ENCODE measurements at regions of chr21 and their contacts with region 1.

Region 1: GRCh38 chr21:39867198-39867650 is at the start of gene PCP4:
- DNase-seq: peak; percentile 32
- H3K4me3 Mint-ChIP-seq: no peak within 1 kb of the TSS
- H3K27ac Mint-ChIP-seq: no peak within 1 kb of the TSS
- H3K4me1 Mint-ChIP-seq: no peaks in the 10 kb centered on the region
- H3K27me3 Mint-ChIP-seq: peaks cover 72% of the 10 kb centered on the region
- CTCF ChIP-seq: peak; percentile 76
- total RNA-seq, gene PCP4: not detected in 2 replicates

Region 2: GRCh38 chr21:39363607-39364555 is 503.3 kb before region 1 on chr21:
- CTCF ChIA-PET with region 1: no interaction called
- POLR2A ChIA-PET with region 1: no interaction called
- intact Hi-C with region 1: no loop called
- DNase-seq: no peak
- H3K4me3 Mint-ChIP-seq: no peak overlapping the region
- H3K27ac Mint-ChIP-seq: no peak overlapping the region
- H3K4me1 Mint-ChIP-seq: no peaks in the 10 kb centered on the region
- H3K27me3 Mint-ChIP-seq: no peaks in the 10 kb centered on the region
- CTCF ChIP-seq: no peak

Region 3: DNA sequence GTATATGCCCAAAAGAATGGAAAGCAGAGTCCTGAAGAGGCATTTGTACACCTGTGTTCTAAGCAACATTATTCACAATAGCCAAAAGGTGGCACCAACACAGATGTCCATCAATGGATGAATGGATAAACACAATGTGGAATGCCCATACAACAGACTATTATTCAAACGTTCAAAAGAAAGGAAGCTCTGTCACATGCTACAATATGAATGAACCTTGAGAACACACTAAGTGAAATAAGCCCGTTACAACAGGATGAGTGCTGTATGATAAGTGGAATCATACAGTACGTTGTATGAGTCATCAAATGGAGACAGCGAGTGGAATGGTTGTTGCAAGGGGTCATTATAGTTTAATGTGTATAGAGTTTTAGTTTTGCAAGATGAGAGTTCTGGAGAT is 335.4 kb before region 1 on chr21:
- CTCF ChIA-PET with region 1: no interaction called
- POLR2A ChIA-PET with region 1: no interaction called
- intact Hi-C with region 1: no loop called
- DNase-seq: no peak
- H3K4me3 Mint-ChIP-seq: no peak overlapping the region
- H3K27ac Mint-ChIP-seq: no peak overlapping the region
- H3K4me1 Mint-ChIP-seq: peaks cover 10% of the 10 kb centered on the region
- H3K27me3 Mint-ChIP-seq: peaks cover 16% of the 10 kb centered on the region
- CTCF ChIP-seq: no peak

Region 4: DNA sequence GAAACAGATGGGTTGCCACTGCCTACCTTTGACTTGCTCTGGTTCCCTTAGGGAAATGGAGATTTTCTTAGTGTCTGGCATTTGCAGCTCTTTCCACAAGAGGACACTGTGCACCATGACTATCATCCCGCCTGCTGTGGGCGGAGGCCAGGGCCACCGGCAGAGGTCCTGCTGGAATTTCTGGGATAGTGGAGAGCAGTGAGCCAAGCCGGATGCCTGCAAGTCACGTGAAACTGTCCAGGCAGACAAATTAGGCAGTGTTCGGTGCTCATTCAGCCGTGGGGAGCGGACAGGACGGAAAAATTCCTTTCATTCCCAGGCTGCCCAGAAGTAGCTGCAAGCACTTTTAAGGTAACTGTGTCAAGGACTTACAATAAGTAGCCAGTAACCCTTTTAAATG is 78.8 kb before region 1 on chr21:
- CTCF ChIA-PET with region 1: interaction called, 24 read pairs
- POLR2A ChIA-PET with region 1: no interaction called
- intact Hi-C with region 1: loop called (anchors 1 kb)
- DNase-seq: peak; percentile 40
- H3K4me3 Mint-ChIP-seq: peak overlapping the region; percentile 41
- H3K27ac Mint-ChIP-seq: no peak overlapping the region
- H3K4me1 Mint-ChIP-seq: no peaks in the 10 kb centered on the region
- H3K27me3 Mint-ChIP-seq: no peaks in the 10 kb centered on the region
- CTCF ChIP-seq: peak; percentile 81

Region 5: DNA sequence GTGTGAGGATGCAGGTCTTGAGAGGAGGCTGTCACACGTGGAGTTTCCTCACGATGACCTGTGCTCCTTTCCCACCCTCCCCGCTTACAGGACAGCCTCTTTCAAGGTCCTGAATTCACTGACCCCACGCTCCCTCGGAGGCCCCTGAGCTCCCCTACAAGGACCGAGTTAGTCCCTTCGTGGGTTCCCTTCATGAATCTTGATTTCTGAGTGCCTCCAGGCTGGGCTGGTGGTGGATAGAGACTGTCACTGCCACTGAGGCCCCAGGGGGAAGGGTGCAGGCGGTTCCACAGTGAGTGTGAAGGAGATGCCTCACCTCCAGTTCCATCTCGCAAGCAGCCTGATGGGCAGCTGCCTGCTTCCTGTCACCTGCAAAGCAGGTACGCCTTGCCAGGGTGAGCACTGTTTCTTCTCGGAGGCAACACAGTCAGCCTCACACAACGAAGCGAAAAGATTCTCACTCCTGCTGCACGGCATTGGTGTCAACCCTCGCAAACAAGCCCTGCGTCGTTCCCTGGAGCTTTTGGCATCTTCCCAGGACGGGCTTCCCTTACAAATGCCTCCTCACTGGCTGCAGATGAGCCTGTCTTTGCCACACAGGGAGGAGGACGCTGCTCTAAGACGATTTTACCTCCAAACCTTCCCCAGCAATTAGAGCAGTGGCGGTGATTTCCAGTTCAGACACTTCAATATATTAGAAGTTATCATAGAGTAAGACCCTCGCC is 26.7 kb before region 1 on chr21:
- CTCF ChIA-PET with region 1: interaction called, 12 read pairs
- POLR2A ChIA-PET with region 1: no interaction called
- intact Hi-C with region 1: no loop called
- DNase-seq: no peak
- H3K4me3 Mint-ChIP-seq: no peak overlapping the region
- H3K27ac Mint-ChIP-seq: no peak overlapping the region
- H3K4me1 Mint-ChIP-seq: peaks cover 6% of the 10 kb centered on the region
- H3K27me3 Mint-ChIP-seq: peaks cover 24% of the 10 kb centered on the region
- CTCF ChIP-seq: no peak

Region 6: GRCh38 chr21:39852021-39852721 is 15.1 kb before region 1 on chr21:
- CTCF ChIA-PET with region 1: interaction called, 37 read pairs
- POLR2A ChIA-PET with region 1: no interaction called
- intact Hi-C with region 1: no loop called
- DNase-seq: no peak
- H3K4me3 Mint-ChIP-seq: no peak overlapping the region
- H3K27ac Mint-ChIP-seq: no peak overlapping the region
- H3K4me1 Mint-ChIP-seq: peaks cover 6% of the 10 kb centered on the region
- H3K27me3 Mint-ChIP-seq: no peaks in the 10 kb centered on the region
- CTCF ChIP-seq: no peak

Region 7: GRCh38 chr21:39882151-39882838 is 15.1 kb after region 1 on chr21:
- CTCF ChIA-PET with region 1: interaction called, 13 read pairs
- POLR2A ChIA-PET with region 1: no interaction called
- intact Hi-C with region 1: no loop called
- DNase-seq: no peak
- H3K4me3 Mint-ChIP-seq: no peak overlapping the region
- H3K27ac Mint-ChIP-seq: no peak overlapping the region
- H3K4me1 Mint-ChIP-seq: no peaks in the 10 kb centered on the region
- H3K27me3 Mint-ChIP-seq: peaks cover 41% of the 10 kb centered on the region
- CTCF ChIP-seq: no peak

Region 8: DNA sequence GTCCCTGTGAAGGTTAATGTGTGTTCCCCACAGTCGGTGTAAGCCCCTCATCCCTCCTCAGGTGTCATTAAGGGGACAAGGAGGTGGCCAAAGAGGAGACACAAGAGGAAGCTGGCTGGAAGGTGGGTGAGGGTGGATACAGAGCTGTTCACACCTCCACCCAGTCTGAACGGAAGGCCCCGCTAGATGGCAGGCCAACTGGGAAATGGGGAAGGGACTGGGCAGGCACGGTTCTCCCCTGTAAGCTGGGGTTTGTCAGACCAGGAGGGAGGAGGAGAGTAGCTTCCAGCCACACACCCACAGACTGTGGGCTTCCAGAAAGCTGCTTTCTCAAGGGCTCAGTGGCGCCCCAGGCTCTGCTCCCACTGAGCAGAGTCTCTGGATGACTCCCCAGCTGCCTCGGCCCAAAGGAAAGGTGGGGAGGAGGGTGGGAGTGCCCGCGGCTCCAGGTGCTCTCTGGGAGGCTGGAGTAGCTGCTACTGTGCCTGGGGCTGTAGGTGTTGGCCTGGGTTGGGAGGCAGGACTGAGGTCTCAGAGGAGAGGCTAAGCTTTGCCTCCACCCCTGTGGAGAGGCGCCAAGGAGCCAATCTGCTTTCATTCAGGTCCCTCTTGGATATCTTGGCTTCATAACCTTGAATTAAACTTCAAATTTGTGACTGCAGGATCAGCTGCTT is 41.2 kb after region 1 on chr21:
- CTCF ChIA-PET with region 1: interaction called, 10 read pairs
- POLR2A ChIA-PET with region 1: no interaction called
- intact Hi-C with region 1: no loop called
- DNase-seq: no peak
- H3K4me3 Mint-ChIP-seq: no peak overlapping the region
- H3K27ac Mint-ChIP-seq: no peak overlapping the region
- H3K4me1 Mint-ChIP-seq: no peaks in the 10 kb centered on the region
- H3K27me3 Mint-ChIP-seq: peaks cover 19% of the 10 kb centered on the region
- CTCF ChIP-seq: no peak

Measured in MCF 10A (cell line).